MCF 10A (cell line): ENCODE measurements at regions of chr14 and their contacts with region 1.

Region 1: GRCh38 chr14:103546652-103547454 is 15.6 kb downstream of the BAG5 start:
- DNase-seq: peak; percentile 67
- H3K4me3 Mint-ChIP-seq: no peak overlapping the region
- H3K27ac Mint-ChIP-seq: no peak overlapping the region
- H3K4me1 Mint-ChIP-seq: peaks cover 6% of the 10 kb centered on the region
- H3K27me3 Mint-ChIP-seq: no peaks in the 10 kb centered on the region
- CTCF ChIP-seq: peak; percentile 98

Region 2: DNA sequence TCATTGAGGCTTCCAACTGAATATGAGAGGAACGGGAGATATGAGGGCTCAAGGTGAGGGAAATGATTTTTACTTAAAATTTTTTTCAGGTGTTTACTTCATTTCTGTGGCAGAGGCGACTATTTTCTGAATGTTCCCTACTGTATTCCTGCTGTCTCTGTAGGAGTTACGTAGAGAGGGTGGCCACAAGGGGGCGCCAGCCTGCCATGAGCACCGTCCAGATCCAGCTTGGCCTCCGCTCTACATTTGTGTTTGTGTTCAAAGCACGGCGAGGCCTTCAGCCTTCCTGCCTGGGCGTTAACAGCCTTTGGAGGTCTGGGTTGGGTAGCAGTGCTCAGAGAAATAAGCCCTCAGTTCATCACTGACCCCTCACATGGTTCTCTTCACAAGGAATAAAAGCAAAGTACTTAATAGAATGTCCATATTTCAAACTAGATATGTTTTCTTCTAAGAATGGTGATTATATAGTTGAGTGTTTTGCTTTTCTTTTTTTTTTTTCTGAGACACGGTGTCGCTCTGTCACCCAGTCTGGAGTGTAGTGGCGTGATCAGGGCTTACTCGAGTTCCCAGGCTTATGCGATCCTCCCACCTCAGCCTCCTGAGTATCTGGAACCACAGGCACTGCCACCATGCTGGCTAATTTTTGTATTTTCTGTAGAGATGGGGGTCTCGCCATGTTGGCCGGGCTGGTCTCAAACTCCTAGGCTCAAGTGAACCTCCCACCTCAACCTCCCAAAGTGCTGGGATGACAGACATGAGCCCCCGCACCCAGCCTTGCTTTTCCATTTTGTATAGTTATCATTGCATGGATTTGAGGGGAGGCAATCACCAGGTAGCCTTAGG is 46.5 kb before region 1 on chr14:
- CTCF ChIA-PET with region 1: interaction called, 52 read pairs
- POLR2A ChIA-PET with region 1: interaction called, 3 read pairs
- intact Hi-C with region 1: loop called (anchors 1 kb)
- DNase-seq: peak; percentile 81
- H3K4me3 Mint-ChIP-seq: no peak overlapping the region
- H3K27ac Mint-ChIP-seq: peak overlapping the region; percentile 51
- H3K4me1 Mint-ChIP-seq: peaks cover 8% of the 10 kb centered on the region
- H3K27me3 Mint-ChIP-seq: no peaks in the 10 kb centered on the region
- CTCF ChIP-seq: peak; percentile 81

Region 3: DNA sequence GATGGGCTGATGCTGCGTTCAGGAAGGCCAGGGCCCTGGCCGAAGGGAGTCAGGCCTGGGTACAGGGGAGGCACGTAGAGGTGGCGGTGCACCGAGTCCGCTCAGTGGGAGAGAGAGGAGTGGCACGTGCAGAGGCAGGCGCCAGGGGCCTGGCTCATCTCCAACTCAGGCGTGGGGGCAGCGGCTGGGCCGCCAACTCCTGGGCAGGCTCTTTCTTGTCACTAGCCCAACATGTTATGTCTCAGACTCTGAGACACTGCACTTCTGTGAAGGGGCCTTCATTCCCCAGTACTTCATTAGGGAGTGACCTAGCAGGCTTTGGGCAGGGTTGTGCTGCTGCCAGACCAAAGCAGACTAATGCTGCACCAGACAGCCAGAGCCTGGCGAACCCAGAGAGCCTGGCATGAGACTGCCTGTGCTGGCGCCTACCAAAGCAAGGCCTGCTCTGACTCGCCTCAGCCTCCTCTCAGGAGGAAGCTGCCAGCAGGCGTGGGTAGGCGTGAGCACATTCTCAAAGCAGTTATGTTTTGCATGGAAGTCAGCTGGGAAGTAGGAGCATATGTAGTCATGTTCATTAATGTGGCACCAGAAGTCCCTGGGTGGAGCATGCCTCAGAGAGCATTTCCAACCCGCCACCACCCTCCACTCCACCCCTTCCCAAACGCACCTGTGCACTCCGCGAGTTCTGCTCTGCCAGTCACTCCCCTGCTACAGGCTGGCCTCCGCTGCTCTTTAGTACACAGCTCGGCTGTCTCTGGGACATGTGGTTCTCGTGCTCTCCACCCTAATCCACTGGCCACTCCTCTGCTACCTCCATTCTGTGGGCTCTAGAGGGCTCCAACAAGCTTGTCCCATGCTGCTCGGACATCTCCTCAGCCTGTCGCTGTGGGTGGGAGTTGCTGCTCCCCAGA is 33.9 kb before region 1 on chr14:
- CTCF ChIA-PET with region 1: interaction called, 126 read pairs
- POLR2A ChIA-PET with region 1: interaction called, 52 read pairs
- intact Hi-C with region 1: loop called (anchors 1 kb)
- DNase-seq: peak; percentile 89
- H3K4me3 Mint-ChIP-seq: peak overlapping the region; percentile 55
- H3K27ac Mint-ChIP-seq: peak overlapping the region; percentile 84
- H3K4me1 Mint-ChIP-seq: peaks cover 19% of the 10 kb centered on the region
- H3K27me3 Mint-ChIP-seq: no peaks in the 10 kb centered on the region
- CTCF ChIP-seq: no peak

Region 4: GRCh38 chr14:103520657-103521437 is 26.0 kb before region 1 on chr14:
- CTCF ChIA-PET with region 1: interaction called, 126 read pairs
- POLR2A ChIA-PET with region 1: interaction called, 52 read pairs
- intact Hi-C with region 1: loop called (anchors 1 kb)
- DNase-seq: peak; percentile 80
- H3K4me3 Mint-ChIP-seq: peak overlapping the region; percentile 70
- H3K27ac Mint-ChIP-seq: peak overlapping the region; percentile 27
- H3K4me1 Mint-ChIP-seq: peaks cover 14% of the 10 kb centered on the region
- H3K27me3 Mint-ChIP-seq: no peaks in the 10 kb centered on the region
- CTCF ChIP-seq: peak; percentile 39